ENCODE measurements at regions of chr17 and their contacts with region 1.

Region 1: DNA sequence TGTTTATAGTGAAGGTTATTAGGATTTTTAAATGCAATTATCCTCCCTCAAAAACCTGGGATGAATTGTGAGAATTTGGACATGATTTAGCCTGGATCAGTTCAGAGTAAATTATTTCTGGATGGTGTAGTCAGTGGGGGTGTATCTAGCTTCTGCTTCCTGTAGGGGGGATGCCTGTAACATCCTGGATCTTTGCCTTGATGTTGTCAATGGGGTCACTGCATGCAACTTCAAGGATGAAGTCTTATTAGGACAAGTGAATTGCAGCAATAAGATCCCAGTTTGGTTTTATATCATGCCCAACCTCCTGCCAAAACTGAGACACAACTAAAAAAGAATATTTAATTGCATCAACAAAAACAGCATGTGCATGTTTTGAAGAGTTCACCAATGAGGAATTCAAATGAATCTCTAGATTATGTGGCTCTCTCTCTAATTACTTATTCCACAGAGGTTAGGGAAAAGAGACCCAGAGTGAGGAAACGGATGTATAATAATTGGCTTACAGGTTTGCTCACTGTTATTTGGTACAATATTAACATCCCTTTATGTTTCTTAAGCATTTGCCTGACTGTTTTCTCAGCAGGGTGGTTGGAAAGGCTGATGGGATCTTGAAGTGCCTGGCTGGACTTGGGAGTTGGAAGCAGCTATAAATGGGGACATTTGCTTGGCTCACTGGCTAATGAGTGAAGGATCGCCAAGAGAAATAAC is 159.8 kb downstream of the HS3ST3B1 start:
- DNase-seq: no peak
- H3K4me3 ChIP-seq: no peak overlapping the region
- H3K27ac ChIP-seq: no peak overlapping the region
- H3K27me3 ChIP-seq: peaks cover 0 to 36% (median 3%) of the 10 kb centered on the region in 45 donors
- CTCF ChIP-seq: no peak

Region 2: DNA sequence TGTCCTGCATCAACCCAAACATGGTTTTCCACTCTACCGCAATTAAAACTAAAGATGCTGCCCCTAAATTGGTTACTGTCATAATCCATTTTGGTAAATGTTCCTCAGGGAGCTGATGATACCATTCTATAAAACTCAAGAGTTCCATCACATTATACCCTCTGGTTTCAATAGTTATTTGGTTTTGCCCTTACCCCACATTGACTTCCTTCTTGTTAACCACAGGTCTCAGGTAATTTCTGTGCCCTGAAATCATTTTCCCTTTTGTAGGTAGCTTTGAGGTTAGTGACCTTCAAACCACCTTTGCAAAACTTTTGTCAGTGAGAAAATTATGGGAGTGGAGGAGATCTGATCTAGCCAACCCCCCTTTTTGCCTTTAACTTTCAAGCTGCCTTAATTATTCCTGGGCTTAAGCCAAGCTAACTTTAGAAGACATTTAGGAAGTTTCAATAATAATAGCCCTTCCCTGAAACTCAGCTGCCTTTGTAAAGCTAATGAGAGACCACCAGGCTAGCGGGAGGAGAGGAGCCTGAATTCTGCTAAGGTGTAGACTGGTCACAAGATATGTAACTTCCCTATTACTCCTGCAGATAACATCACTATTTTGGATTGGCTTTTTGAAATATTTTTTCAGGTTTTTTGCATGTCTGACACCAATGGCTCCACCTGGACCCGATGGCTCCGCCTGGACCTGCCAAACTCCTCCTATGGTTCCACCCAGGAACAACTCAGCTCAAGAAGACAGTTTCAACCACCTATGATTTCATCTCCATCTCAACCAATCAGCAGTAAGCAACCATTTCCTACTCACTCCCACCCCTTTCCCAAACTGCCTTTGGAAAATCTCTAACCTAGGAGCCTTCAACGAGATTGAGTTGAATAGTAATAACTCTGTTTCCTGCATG is 65.1 kb after region 1 on chr17:
- intact Hi-C with region 1: loop called in 1 of 2 experiments (anchors 10 kb)
- DNase-seq: no peak
- H3K4me3 ChIP-seq: no peak overlapping the region
- H3K27ac ChIP-seq: no peak overlapping the region
- H3K27me3 ChIP-seq: no peaks in the 10 kb centered on the region
- CTCF ChIP-seq: no peak